ENCODE measurements at regions of chr17 and their contacts with region 1.

Region 1: GRCh38 chr17:30244853-30245385 is 9.4 kb upstream of the SLC6A4 start:
- DNase-seq: peak in 1 of 3 donors; percentile 28
- H3K4me3 ChIP-seq: no peak overlapping the region
- H3K4me3 Mint-ChIP-seq: no peak overlapping the region
- H3K27ac ChIP-seq: no peak overlapping the region
- H3K27ac Mint-ChIP-seq: no peak overlapping the region
- H3K4me1 ChIP-seq: no peaks in the 10 kb centered on the region
- H3K4me1 Mint-ChIP-seq: no peaks in the 10 kb centered on the region
- H3K27me3 ChIP-seq: no peaks in the 10 kb centered on the region
- H3K27me3 Mint-ChIP-seq: peaks cover 1 to 9% (median 7%) of the 10 kb centered on the region in 3 donors
- CTCF ChIP-seq: no peak

Region 2: DNA sequence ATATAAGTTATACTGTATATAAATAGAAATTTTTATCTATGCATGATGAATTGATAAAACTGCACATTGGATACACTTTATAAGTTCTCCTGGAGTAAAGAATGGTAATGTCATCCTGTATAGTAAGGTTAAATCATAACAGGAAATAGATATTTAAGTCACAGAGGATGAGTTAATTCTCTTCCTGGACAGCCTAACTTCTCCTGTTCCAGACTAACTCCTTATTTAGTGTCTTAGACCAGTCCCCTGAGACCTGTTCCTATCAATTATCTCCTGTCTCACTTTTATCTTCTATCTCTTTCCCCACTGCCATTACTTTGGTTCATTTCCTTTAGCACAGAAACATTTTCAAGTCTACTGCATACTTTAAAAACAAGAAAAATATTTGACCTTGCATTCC is 361.4 kb before region 1 on chr17:
- intact Hi-C with region 1: no loop called
- DNase-seq: no peak
- H3K4me3 ChIP-seq: no peak overlapping the region
- H3K4me3 Mint-ChIP-seq: no peak overlapping the region
- H3K27ac ChIP-seq: no peak overlapping the region
- H3K27ac Mint-ChIP-seq: peak overlapping the region in 1 of 7 donors; percentile 68
- H3K4me1 ChIP-seq: peaks cover 21 to 24% of the 10 kb centered on the region in 2 donors
- H3K4me1 Mint-ChIP-seq: peaks cover 31% of the 10 kb centered on the region
- H3K27me3 ChIP-seq: no peaks in the 10 kb centered on the region
- H3K27me3 Mint-ChIP-seq: no peaks in the 10 kb centered on the region
- CTCF ChIP-seq: no peak

Region 3: DNA sequence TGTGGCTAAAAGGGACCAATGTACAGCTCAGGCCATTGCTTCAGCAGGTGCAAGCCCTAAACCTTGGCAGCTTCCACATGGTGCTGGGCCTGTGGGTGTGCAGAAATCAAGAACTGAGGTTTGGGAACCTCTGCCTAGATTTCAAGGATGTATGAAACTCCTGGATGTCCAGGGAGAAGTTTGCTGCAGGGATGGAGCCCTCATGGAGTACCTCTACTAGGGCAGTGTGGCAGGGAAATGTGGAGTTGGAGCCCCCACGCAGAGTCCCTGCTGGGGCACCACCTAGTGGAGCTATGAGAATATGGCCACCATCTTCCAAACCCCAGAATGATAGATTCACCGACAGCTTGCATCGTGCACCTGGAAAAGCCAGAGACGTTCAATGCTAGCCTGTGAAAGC is 290.5 kb before region 1 on chr17:
- intact Hi-C with region 1: no loop called
- DNase-seq: no peak
- H3K4me3 ChIP-seq: no peak overlapping the region
- H3K4me3 Mint-ChIP-seq: no peak overlapping the region
- H3K27ac ChIP-seq: no peak overlapping the region
- H3K27ac Mint-ChIP-seq: no peak overlapping the region
- H3K4me1 ChIP-seq: peaks cover 14 to 20% of the 10 kb centered on the region in 2 donors
- H3K4me1 Mint-ChIP-seq: peaks cover 20% of the 10 kb centered on the region
- H3K27me3 ChIP-seq: no peaks in the 10 kb centered on the region
- H3K27me3 Mint-ChIP-seq: peaks cover 0 to 2% (median 0%) of the 10 kb centered on the region in 3 donors
- CTCF ChIP-seq: no peak

Region 4: DNA sequence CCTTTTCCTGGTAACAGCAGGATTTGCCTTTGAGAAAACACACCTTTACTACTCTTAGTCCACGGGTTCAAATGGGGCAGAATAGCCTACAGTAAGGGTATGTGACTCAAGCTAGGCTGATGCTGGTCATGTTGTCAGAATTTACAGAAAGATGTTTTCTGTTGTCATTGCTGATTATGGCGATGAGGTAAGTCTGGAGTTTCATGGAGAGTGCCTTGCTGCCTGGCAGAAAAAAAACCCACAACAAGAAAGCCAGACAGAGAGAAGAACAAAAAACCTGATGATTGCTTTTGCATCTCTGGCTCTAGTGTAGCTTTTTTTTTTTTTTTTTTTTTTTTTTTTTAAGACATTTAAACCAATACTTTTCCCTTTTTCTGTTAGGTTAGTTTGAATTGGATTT is 57.3 kb before region 1 on chr17:
- intact Hi-C with region 1: loop called in 1 of 2 experiments (anchors 10 kb)
- DNase-seq: peak in 1 of 3 donors; percentile 39
- H3K4me3 ChIP-seq: no peak overlapping the region
- H3K4me3 Mint-ChIP-seq: no peak overlapping the region
- H3K27ac ChIP-seq: no peak overlapping the region
- H3K27ac Mint-ChIP-seq: peak overlapping the region in 1 of 7 donors; percentile 30
- H3K4me1 ChIP-seq: no peaks in the 10 kb centered on the region
- H3K4me1 Mint-ChIP-seq: no peaks in the 10 kb centered on the region
- H3K27me3 ChIP-seq: peaks cover 0 to 2% of the 10 kb centered on the region in 2 donors
- H3K27me3 Mint-ChIP-seq: peaks cover 5 to 9% (median 7%) of the 10 kb centered on the region in 3 donors
- CTCF ChIP-seq: no peak

Region 5: DNA sequence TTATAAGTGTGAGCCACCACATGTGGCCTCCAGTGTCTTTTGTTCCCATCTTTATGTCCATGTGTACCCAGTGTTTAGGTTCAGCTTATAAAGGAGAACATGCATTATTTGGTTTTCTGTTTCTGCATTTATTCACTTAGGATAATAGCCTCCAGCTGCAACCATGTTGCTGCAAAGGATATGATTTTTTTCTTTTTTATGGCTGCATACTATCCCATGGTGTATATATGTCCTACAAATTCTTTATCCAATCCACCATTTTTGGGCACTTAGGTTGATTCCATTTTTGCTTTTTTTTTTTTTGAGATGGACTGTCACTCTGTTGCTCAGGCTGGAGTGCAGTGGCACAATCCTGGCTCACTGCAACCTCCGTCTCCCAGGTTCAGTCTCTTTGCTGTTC is 619.7 kb after region 1 on chr17:
- intact Hi-C with region 1: no loop called
- DNase-seq: no peak
- H3K4me3 ChIP-seq: no peak overlapping the region
- H3K4me3 Mint-ChIP-seq: no peak overlapping the region
- H3K27ac ChIP-seq: peak overlapping the region in 1 of 2 donors; percentile 34
- H3K27ac Mint-ChIP-seq: peak overlapping the region in 1 of 7 donors; percentile 52
- H3K4me1 ChIP-seq: peaks cover 0 to 2% of the 10 kb centered on the region in 2 donors
- H3K4me1 Mint-ChIP-seq: peaks cover 4% of the 10 kb centered on the region
- H3K27me3 ChIP-seq: no peaks in the 10 kb centered on the region
- H3K27me3 Mint-ChIP-seq: peaks cover 0 to 2% (median 1%) of the 10 kb centered on the region in 3 donors
- CTCF ChIP-seq: no peak